PC-3 (cell line): ENCODE measurements at regions of chr11 and their contacts with region 1.

Region 1: DNA sequence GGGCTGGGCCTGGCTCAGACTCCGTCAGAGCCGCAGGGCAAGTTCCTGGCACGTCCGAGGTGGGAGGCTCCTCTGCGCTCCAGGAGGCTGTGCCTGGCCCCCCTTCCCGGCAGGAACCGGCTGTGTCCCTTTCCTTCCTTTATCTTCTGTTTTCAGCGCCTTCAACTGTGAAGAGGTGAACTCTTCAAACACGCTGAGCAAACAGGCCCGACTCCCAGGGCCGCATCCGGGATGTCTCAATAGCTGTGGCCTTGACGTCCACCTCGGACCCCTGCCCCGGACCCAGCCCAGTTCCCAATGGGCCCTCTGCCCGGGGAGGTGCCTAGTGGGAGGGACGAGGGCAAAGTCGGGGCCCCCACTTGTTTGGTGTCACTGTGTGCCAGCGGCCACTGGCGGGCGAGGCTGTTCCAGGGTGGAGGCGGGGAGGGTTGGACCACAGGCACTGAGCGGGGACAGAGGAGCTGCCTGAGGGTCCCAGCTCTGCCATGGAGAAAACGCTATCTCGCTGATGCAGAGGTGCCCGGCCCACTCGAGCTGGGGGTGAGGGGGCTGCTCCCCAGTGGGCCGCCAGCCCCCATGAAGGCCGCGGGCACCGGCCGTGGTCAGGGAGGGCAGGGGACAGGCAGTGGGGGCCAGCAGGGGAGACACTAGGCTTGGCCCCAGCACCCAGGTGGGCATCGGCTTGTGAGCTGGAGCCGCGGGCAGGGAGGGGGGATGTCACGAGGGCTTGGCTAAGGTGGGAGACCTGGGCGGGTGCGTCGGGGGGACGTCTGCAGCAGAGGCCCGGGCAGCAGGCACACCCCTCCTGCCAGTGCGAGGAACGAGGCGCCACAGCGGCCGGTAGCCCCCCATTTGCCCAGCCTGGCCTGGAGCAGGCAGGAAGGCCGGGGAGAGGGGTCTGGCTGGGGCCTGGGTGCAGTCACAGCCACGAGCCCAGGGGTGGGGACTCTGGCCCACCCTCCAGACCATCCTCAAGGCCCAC is 2.7 kb upstream of the MUC5B start:
- DNase-seq: peak; percentile 55
- ATAC-seq: peak; percentile 57
- H3K4me3 ChIP-seq: no peak overlapping the region
- H3K27ac ChIP-seq: peak overlapping the region; percentile 40; the same call in 1 of the 2 replicates
- H3K4me1 ChIP-seq: peaks cover 28% of the 10 kb centered on the region
- H3K27me3 ChIP-seq: no peaks in the 10 kb centered on the region
- CTCF ChIP-seq: no peak

Region 2: GRCh38 chr11:1160231-1161101 is 59.7 kb before region 1 on chr11:
- CTCF ChIA-PET with region 1: no interaction called
- POLR2A ChIA-PET with region 1: no interaction called
- intact Hi-C with region 1: no loop called
- DNase-seq: no peak
- ATAC-seq: no peak
- H3K4me3 ChIP-seq: no peak overlapping the region
- H3K27ac ChIP-seq: no peak overlapping the region
- H3K4me1 ChIP-seq: no peaks in the 10 kb centered on the region
- H3K27me3 ChIP-seq: no peaks in the 10 kb centered on the region
- CTCF ChIP-seq: no peak

Region 3: DNA sequence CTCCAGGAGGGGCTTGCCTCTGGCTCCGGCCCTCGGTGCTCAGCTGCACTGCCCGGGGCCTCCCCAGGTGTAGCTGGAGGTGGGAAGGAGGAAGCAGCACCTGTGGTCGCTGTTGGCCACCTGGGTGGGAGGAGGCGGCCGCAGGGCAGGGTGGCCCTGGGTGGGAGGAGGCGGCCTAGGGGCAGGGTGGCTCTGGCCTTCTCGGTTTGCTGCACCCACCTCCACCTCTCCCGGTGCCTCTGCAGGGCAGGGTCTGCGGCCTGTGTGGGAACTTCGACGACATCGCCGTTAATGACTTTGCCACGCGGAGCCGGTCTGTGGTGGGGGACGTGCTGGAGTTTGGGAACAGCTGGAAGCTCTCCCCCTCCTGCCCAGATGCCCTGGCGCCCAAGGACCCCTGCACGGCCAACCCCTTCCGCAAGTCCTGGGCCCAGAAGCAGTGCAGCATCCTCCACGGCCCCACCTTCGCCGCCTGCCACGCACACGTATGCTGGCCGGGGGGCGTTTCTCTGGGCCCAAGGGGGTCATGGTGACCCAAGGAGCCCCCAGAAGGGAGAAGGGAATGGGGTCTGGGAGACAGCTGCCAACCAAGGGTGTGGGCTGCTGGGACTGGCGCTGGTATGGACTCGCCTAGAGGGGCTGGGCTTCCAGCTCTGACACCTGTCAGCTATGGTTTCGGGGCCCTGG is 41.8 kb before region 1 on chr11:
- CTCF ChIA-PET with region 1: no interaction called
- POLR2A ChIA-PET with region 1: interaction called, 14 read pairs
- intact Hi-C with region 1: no loop called
- DNase-seq: no peak
- ATAC-seq: no peak
- H3K4me3 ChIP-seq: no peak overlapping the region
- H3K27ac ChIP-seq: no peak overlapping the region
- H3K4me1 ChIP-seq: no peaks in the 10 kb centered on the region
- H3K27me3 ChIP-seq: no peaks in the 10 kb centered on the region
- CTCF ChIP-seq: no peak